Calu3 (cell line): ENCODE measurements at regions of chr10 and their contacts with region 1.

Region 1: DNA sequence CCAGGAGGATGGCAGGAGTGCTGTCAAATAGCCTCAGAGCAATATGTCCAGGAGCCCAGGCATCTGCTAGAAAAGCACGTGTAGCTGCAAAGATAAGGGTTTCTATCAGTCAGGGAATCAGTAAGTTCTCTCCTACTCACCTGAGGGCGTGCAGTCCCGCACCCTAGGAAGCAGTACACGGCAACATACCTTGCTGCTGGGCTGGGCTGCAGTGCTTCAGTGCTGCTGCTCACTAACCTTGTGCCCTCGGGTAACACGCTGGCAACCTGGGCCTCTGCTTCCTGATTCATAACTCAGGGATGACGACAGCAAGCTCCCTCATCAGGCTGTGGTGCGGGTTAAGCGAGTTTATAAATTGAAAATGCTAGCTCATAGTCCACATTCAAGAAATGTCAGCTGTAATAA is 29.5 kb upstream of the CCNY start:
- DNase-seq: peak; percentile 75
- H3K4me3 Mint-ChIP-seq: peak overlapping the region; percentile 27
- H3K27ac Mint-ChIP-seq: peak overlapping the region; percentile 82
- H3K4me1 Mint-ChIP-seq: peaks cover 23% of the 10 kb centered on the region
- H3K27me3 Mint-ChIP-seq: no peaks in the 10 kb centered on the region
- CTCF ChIP-seq: no peak

Region 2: DNA sequence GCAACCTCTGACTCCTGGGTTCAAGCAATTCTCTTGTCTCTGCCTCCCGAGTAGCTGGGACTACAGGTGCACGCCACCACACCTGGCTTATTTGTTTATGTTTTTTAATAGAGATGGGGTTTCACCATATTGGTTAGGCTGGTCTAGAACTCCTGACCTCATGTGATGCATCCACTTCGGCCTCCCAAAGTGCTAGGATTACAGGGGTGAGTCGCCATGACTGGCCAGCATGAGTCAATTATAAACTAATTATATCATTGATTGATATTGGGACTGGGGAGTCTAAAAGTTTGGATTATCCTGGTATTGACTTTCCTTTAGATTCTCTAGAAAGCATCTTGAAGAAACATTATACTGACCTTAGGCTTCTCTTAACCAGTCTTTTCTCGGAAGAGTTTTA is 44.4 kb before region 1 on chr10:
- CTCF ChIA-PET with region 1: interaction called, 3 read pairs
- intact Hi-C with region 1: loop called (anchors 2 kb)
- DNase-seq: no peak
- H3K4me3 Mint-ChIP-seq: no peak overlapping the region
- H3K27ac Mint-ChIP-seq: no peak overlapping the region
- H3K4me1 Mint-ChIP-seq: peaks cover 5% of the 10 kb centered on the region
- H3K27me3 Mint-ChIP-seq: no peaks in the 10 kb centered on the region
- CTCF ChIP-seq: no peak